CD4-positive, alpha-beta memory T cell (primary cell): ENCODE measurements at regions of chr11 and their contacts with region 1.

Region 1: GRCh38 chr11:47766305-47767227 is 575 bp downstream of the FNBP4 start:
- DNase-seq: peak; percentile 79 to 86 (median 83)
- H3K4me3 ChIP-seq: peak overlapping the region; percentile 83 to 85
- H3K4me3 Mint-ChIP-seq: peak overlapping the region; percentile 96 to 100 (median 96)
- H3K27ac ChIP-seq: peak overlapping the region; percentile 99
- H3K27ac Mint-ChIP-seq: peak overlapping the region; percentile 98 to 100 (median 100)
- H3K4me1 ChIP-seq: peaks cover 25% of the 10 kb centered on the region
- H3K4me1 Mint-ChIP-seq: peaks cover 18 to 41% (median 23%) of the 10 kb centered on the region in 4 donors
- H3K27me3 ChIP-seq: no peaks in the 10 kb centered on the region
- H3K27me3 Mint-ChIP-seq: no peaks in the 10 kb centered on the region

Region 2: GRCh38 chr11:47248664-47249377 is 517.7 kb before region 1 on chr11 and contains the start of gene ACP2:
- CTCF ChIA-PET with region 1: no interaction called
- POLR2A ChIA-PET with region 1: interaction called, 3 read pairs
- intact Hi-C with region 1: loop called (anchors 1 kb)
- DNase-seq: peak; percentile 87 to 90 (median 87)
- H3K4me3 ChIP-seq: peak within 1 kb of the TSS; percentile 89 to 94
- H3K4me3 Mint-ChIP-seq: peak within 1 kb of the TSS; percentile 99 to 100 (median 99)
- H3K27ac ChIP-seq: peak within 1 kb of the TSS; percentile 75
- H3K27ac Mint-ChIP-seq: peak within 1 kb of the TSS; percentile 91 to 99 (median 99)
- H3K4me1 ChIP-seq: peaks cover 20% of the 10 kb centered on the region
- H3K4me1 Mint-ChIP-seq: peaks cover 12 to 29% (median 20%) of the 10 kb centered on the region in 4 donors
- H3K27me3 ChIP-seq: no peaks in the 10 kb centered on the region
- H3K27me3 Mint-ChIP-seq: no peaks in the 10 kb centered on the region
- total RNA-seq, gene ACP2: 23.6 to 23.7 TPM

Region 3: DNA sequence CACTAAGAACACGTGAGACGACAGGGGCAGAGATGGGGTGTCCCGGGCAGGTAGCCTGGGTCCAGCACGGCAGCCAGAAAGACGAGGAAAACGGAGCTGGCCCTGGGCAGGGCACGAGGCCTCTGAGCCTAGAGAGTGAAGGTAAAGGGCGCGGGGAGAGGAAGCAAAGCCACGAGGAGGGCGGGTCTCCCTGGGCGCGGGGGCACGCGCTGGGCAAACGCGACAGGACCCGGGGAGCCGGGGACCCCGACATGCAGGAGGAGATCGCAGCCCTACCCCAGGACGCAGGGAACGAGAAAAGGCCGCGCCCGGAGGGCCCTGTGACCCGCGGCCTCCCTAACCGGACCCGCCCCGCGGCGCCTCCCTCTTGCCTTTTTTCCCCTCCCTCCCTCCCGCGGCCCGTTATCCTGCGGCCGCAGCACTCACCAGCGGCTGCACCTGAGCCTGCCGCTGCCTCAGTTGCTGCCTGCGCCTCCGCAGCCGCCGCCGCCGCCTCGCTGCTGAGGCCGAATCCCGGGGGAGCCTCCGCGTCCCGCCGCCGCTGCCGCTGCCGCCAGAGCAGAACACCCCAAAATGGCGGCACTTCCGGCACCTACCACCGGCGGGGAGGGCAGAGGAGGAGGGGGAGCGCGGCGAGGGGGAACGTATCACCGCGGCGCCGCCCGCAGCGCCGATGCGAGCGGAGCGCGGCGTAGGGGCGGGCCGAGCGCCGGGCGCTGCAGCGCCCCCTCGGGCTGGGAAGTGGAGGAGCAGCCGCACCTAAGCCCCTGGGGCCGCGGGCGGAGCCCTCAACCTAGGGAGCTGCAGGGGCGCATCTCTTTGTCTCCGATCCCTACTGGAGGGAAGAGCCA is 213.8 kb before region 1 on chr11 and contains the start of gene CELF1:
- CTCF ChIA-PET with region 1: no interaction called
- POLR2A ChIA-PET with region 1: interaction called, 3 read pairs
- intact Hi-C with region 1: loop called (anchors 1 kb)
- DNase-seq: peak; percentile 92 to 94 (median 93)
- H3K4me3 ChIP-seq: peak within 1 kb of the TSS; percentile 85 to 91
- H3K4me3 Mint-ChIP-seq: peak within 1 kb of the TSS; percentile 94 to 98 (median 96)
- H3K27ac ChIP-seq: peak within 1 kb of the TSS; percentile 88
- H3K27ac Mint-ChIP-seq: peak within 1 kb of the TSS; percentile 93 to 98 (median 97)
- H3K4me1 ChIP-seq: peaks cover 50% of the 10 kb centered on the region
- H3K4me1 Mint-ChIP-seq: peaks cover 30 to 51% (median 40%) of the 10 kb centered on the region in 4 donors
- H3K27me3 ChIP-seq: no peaks in the 10 kb centered on the region
- H3K27me3 Mint-ChIP-seq: no peaks in the 10 kb centered on the region
- total RNA-seq, gene CELF1: 145 to 149 TPM

Region 4: GRCh38 chr11:47642099-47642855 is 124.3 kb before region 1 on chr11 and contains the start of gene MTCH2:
- CTCF ChIA-PET with region 1: interaction called, 4 read pairs
- POLR2A ChIA-PET with region 1: interaction called, 7 read pairs
- intact Hi-C with region 1: loop called (anchors 1 kb)
- DNase-seq: peak; percentile 95 to 96 (median 96)
- H3K4me3 ChIP-seq: peak within 1 kb of the TSS; percentile 86 to 90
- H3K4me3 Mint-ChIP-seq: peak within 1 kb of the TSS; percentile 82 to 98 (median 96)
- H3K27ac ChIP-seq: peak within 1 kb of the TSS; percentile 93
- H3K27ac Mint-ChIP-seq: peak within 1 kb of the TSS; percentile 84 to 99 (median 98)
- H3K4me1 ChIP-seq: peaks cover 23% of the 10 kb centered on the region
- H3K4me1 Mint-ChIP-seq: peaks cover 11 to 31% (median 18%) of the 10 kb centered on the region in 4 donors
- H3K27me3 ChIP-seq: no peaks in the 10 kb centered on the region
- H3K27me3 Mint-ChIP-seq: no peaks in the 10 kb centered on the region
- total RNA-seq, gene MTCH2: 23.6 to 23.9 TPM

Region 5: DNA sequence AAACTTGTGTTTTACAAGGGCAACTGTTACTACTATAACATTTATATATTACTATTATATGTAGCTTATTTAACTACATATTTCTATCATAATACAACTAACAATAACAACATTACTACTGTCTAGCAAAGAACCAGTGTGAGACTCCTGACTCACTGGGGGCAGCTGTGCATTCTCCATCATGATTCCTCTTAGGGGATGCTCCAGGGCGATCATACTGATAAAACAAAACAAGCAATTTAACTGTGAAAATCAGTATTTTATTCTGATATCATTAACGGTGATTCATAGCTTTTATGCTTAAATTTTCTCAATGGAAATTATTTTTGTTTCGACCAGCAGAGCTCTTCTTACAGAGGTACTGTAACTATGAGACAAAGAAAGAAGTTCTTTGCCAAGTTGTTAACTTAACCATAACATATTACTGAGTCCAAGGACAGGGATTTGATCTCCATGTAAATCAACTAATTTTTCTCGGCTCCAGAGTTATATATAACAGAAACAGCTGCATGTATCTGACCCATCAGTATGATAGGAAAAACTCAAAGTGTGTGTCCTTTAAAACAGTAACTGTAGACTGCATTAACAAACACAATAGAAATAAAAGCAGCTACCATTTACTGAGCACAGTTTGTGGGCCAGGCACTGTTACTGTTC is 25.3 kb after region 1 on chr11:
- CTCF ChIA-PET with region 1: no interaction called
- POLR2A ChIA-PET with region 1: interaction called, 10 read pairs
- intact Hi-C with region 1: no loop called
- DNase-seq: no peak
- H3K4me3 ChIP-seq: no peak overlapping the region
- H3K4me3 Mint-ChIP-seq: no peak overlapping the region
- H3K27ac ChIP-seq: no peak overlapping the region
- H3K27ac Mint-ChIP-seq: no peak overlapping the region
- H3K4me1 ChIP-seq: no peaks in the 10 kb centered on the region
- H3K4me1 Mint-ChIP-seq: no peaks in the 10 kb centered on the region
- H3K27me3 ChIP-seq: no peaks in the 10 kb centered on the region
- H3K27me3 Mint-ChIP-seq: no peaks in the 10 kb centered on the region

Region 6: DNA sequence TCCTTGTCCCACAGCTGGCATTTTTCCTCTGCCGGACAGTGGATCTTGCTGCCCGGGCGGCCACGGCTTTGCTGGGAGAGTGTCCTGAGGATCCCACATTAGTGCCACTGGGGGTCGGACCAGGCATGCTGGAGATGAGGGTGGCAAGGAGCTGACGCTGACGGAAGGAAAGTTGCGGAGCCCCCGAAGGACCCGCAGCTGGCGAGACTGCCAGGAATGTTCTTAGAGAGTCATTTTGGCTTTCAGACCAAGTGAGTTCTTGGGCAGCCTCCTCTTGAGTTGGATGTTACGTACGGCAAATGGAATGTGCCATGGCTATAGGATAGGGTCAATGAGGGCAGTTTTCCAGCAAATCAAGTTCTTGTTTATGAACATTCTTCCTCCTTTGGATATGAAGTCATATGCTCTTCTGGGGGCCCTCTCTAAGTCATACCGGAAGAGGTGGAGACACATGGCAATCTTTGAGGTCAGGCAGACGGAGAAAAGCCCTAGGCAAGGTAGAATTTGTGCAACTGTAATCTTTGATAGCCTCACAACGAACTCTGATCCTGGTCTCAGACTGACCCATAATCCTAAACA is 139.0 kb after region 1 on chr11:
- CTCF ChIA-PET with region 1: no interaction called
- POLR2A ChIA-PET with region 1: no interaction called
- intact Hi-C with region 1: no loop called
- DNase-seq: no peak
- H3K4me3 ChIP-seq: no peak overlapping the region
- H3K4me3 Mint-ChIP-seq: peak overlapping the region in 3 of 8 donors; percentile 59 to 66 (median 65)
- H3K27ac ChIP-seq: no peak overlapping the region
- H3K27ac Mint-ChIP-seq: peak overlapping the region in 1 of 7 donors; percentile 7
- H3K4me1 ChIP-seq: no peaks in the 10 kb centered on the region
- H3K4me1 Mint-ChIP-seq: peaks cover 4 to 15% (median 7%) of the 10 kb centered on the region in 4 donors
- H3K27me3 ChIP-seq: no peaks in the 10 kb centered on the region
- H3K27me3 Mint-ChIP-seq: no peaks in the 10 kb centered on the region

Region 7: GRCh38 chr11:48001438-48002021 is 235.0 kb after region 1 on chr11:
- CTCF ChIA-PET with region 1: no interaction called
- POLR2A ChIA-PET with region 1: interaction called, 3 read pairs
- intact Hi-C with region 1: loop called (anchors 1 kb)
- DNase-seq: peak; percentile 90 to 97 (median 95)
- H3K4me3 ChIP-seq: peak overlapping the region in 1 of 2 donors; percentile 14
- H3K4me3 Mint-ChIP-seq: peak overlapping the region; percentile 66 to 93 (median 76)
- H3K27ac ChIP-seq: peak overlapping the region; percentile 65
- H3K27ac Mint-ChIP-seq: peak overlapping the region; percentile 90 to 99 (median 97)
- H3K4me1 ChIP-seq: peaks cover 95% of the 10 kb centered on the region
- H3K4me1 Mint-ChIP-seq: peaks cover 61 to 93% (median 80%) of the 10 kb centered on the region in 4 donors
- H3K27me3 ChIP-seq: no peaks in the 10 kb centered on the region
- H3K27me3 Mint-ChIP-seq: no peaks in the 10 kb centered on the region